Endothelial cell of umbilical vein (primary cell): ENCODE measurements at regions of chr13 and their contacts with region 1.

Region 1: GRCh38 chr13:67147342-67148133 is 82.6 kb downstream of the PCDH9 start:
- DNase-seq: peak; percentile 64
- H3K4me3 ChIP-seq: peak overlapping the region in 1 of 3 experiments; percentile 48
- H3K27ac ChIP-seq: peak overlapping the region; percentile 96
- H3K4me1 ChIP-seq: peaks cover 40% of the 10 kb centered on the region
- H3K27me3 ChIP-seq: no peaks in the 10 kb centered on the region
- CTCF ChIP-seq: no peak
- POLR2A ChIP-seq: no peak

Region 2: GRCh38 chr13:66635526-66635925 is 512.0 kb before region 1 on chr13:
- CTCF ChIA-PET with region 1: no interaction called
- POLR2A ChIA-PET with region 1: no interaction called
- dilution Hi-C with region 1: no loop called
- intact Hi-C with region 1: loop called (anchors 5 kb)
- DNase-seq: peak; percentile 89
- H3K4me3 ChIP-seq: no peak overlapping the region
- H3K27ac ChIP-seq: peak overlapping the region; percentile 70
- H3K4me1 ChIP-seq: peaks cover 18% of the 10 kb centered on the region
- H3K27me3 ChIP-seq: no peaks in the 10 kb centered on the region
- CTCF ChIP-seq: no peak
- POLR2A ChIP-seq: no peak

Region 3: DNA sequence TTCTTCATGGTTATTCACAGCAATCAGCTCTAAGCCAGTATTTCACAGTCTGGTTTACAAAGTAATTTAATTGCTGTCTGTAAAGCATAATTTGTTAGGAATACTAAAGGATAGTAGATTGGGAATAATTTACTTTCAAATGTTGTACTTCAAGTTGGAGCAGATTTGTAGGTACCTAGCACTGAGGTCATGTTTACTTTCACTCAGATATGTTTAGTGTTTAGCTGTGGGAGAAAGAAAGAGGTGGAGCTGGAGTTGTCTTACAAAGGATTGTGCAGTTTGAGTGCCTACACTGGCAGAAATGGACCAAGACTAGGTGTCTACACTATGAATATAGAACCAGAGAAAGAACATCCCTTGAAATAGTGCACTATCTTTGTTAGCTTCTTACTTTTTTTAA is 382.0 kb before region 1 on chr13:
- CTCF ChIA-PET with region 1: no interaction called
- POLR2A ChIA-PET with region 1: no interaction called
- dilution Hi-C with region 1: no loop called
- intact Hi-C with region 1: no loop called
- DNase-seq: no peak
- H3K4me3 ChIP-seq: no peak overlapping the region
- H3K27ac ChIP-seq: no peak overlapping the region
- H3K4me1 ChIP-seq: no peaks in the 10 kb centered on the region
- H3K27me3 ChIP-seq: no peaks in the 10 kb centered on the region
- CTCF ChIP-seq: no peak
- POLR2A ChIP-seq: no peak

Region 4: GRCh38 chr13:67119481-67119883 is 28.1 kb before region 1 on chr13:
- CTCF ChIA-PET with region 1: no interaction called
- POLR2A ChIA-PET with region 1: no interaction called
- dilution Hi-C with region 1: no loop called
- intact Hi-C with region 1: loop called (anchors 1 kb)
- DNase-seq: peak; percentile 90
- H3K4me3 ChIP-seq: no peak overlapping the region
- H3K27ac ChIP-seq: no peak overlapping the region
- H3K4me1 ChIP-seq: peaks cover 3% of the 10 kb centered on the region
- H3K27me3 ChIP-seq: no peaks in the 10 kb centered on the region
- CTCF ChIP-seq: no peak
- POLR2A ChIP-seq: no peak

Region 5: GRCh38 chr13:67224148-67224846 is 76.8 kb after region 1 on chr13:
- CTCF ChIA-PET with region 1: interaction called, 3 read pairs
- POLR2A ChIA-PET with region 1: no interaction called
- dilution Hi-C with region 1: no loop called
- intact Hi-C with region 1: loop called (anchors 1 kb)
- DNase-seq: peak; percentile 88
- H3K4me3 ChIP-seq: peak overlapping the region in 1 of 3 experiments; percentile 21
- H3K27ac ChIP-seq: no peak overlapping the region
- H3K4me1 ChIP-seq: peaks cover 15% of the 10 kb centered on the region
- H3K27me3 ChIP-seq: no peaks in the 10 kb centered on the region
- CTCF ChIP-seq: peak; percentile 51 to 60
- POLR2A ChIP-seq: no peak